ENCODE measurements at regions of chr20 and their contacts with region 1.

Region 1: DNA sequence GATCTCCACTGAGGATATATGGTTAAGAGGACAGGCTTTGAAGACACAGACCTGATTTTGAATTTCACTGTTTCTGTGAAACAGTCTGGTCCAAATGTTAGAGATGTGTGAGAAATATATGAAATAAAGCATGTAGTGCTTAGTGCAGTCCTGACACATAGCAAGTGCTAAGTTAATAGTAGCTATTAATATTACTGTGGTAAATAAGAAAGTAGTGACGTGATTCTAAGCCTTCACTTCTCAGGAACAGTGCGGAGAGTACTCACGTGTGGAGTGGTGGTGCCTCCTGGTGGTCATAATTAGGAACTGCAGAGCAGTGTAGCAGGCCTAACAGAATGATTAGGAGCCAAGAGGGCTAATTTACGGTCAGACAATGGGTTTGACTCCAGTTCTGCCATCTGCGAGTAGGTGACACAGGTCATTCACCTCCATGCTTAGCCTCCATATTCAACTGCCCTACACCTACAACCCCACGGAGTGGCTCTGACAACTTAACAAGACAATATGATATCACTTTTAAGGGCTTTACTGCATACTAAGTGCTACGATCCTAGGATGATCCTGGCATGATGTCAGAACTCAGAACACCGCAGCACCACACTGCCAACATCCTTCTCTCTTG is 106.2 kb downstream of the JPH2 start:
- DNase-seq: peak in 1 of 2 donors; percentile 81
- ATAC-seq: peak; percentile 94

Region 2: DNA sequence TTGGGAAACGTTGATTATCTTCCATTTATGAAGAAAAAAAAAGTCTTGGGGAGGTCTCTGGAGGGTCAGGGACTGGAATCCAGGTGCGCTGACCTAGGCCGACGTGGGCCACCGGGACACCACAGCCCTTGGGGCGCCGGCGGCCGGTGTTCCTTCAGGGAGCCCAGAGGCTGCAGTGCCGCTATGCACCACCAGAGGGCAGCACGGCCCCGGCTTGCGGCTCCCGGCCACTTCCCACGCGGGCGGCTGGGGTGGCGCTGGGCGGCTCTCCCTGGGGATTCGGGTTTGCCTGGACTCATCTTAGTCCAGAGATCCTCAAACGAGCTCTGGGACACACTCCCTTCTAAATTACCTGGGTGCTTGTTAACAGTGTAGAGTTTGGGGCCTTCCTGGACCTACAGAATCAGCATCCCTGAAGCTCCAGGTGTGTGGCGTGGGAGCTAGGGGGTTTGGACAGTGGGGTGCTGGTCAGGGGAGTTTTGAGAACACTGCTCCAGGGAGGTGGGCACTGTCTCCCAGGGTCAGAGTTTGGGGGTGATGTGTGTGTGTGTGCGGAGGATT is 330.9 kb before region 1 on chr20:
- intact Hi-C with region 1: loop called (anchors 1 to 10 kb)
- DNase-seq: peak; percentile 46 to 88
- ATAC-seq: peak; percentile 90

Region 3: DNA sequence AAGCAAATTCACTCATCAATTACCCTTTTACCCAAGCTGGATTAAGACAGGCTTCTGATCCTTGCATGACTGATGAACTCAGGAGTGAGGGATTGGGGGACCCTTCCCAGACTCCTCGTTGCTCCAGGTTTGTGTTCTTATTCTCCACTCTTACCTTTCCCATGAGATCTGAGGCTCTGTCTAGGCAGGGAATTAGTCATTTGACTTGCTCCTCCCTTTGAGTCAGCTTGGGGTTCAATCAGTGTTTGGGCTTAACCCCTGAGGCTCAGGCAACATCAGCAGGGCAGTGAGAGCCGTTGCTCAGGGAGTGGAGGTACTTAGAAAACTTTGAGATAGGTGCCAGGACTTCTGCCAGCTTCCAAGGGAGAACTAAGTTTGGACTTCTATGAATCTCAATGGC is 186.8 kb before region 1 on chr20:
- intact Hi-C with region 1: no loop called
- DNase-seq: no peak
- ATAC-seq: no peak

Measured in left colon (tissue), 2 donors.